WTC11 (cell line): ENCODE measurements at regions of chr18 and their contacts with region 1.

Region 1: GRCh38 chr18:74836296-74837139 is 238.8 kb downstream of the ZNF407 start:
- DNase-seq: no peak
- ATAC-seq: peak; percentile 80
- H3K4me3 Mint-ChIP-seq: no peak overlapping the region
- H3K27ac Mint-ChIP-seq: no peak overlapping the region
- H3K4me1 Mint-ChIP-seq: peaks cover 27% of the 10 kb centered on the region
- H3K27me3 Mint-ChIP-seq: no peaks in the 10 kb centered on the region
- CTCF ChIP-seq: no peak

Region 2: DNA sequence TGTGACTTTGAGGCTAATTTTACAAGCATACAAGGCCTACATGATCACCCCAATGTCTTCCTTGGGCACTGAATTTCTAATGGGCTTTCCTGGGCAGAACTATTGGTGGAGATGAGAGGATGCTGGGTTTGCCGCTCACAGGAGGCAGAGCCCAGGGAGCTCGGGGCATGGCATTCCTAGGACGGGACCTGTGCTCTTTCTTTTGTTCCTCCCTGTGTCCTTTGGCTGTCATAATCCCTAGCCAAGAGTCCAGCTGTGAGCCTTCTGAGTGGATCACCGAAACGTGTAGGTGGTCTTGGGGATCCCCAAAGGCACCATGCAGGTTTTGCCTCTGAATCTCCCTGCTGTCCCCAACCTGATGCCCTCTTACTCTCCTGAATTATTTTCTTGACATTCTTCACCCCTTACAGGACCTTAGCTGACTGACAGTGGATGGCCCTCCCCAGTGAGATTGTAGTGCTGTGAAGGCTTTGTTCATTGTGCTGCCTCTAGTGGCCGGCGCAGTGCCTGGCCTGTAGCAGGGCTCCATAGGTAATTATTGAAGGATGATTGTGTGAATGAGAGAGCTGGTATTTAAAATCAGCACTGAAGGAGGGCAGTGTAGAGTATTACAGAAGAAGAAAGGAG is 17.0 kb before region 1 on chr18:
- CTCF ChIA-PET with region 1: interaction called, 27 read pairs
- POLR2A ChIA-PET with region 1: no interaction called
- DNase-seq: peak; percentile 76
- ATAC-seq: peak; percentile 100
- H3K4me3 Mint-ChIP-seq: no peak overlapping the region
- H3K27ac Mint-ChIP-seq: no peak overlapping the region
- H3K4me1 Mint-ChIP-seq: peaks cover 4% of the 10 kb centered on the region; the same call in 1 of the 2 replicates
- H3K27me3 Mint-ChIP-seq: no peaks in the 10 kb centered on the region
- CTCF ChIP-seq: peak; percentile 62

Region 3: GRCh38 chr18:75322206-75322605 is 485.7 kb after region 1 on chr18:
- CTCF ChIA-PET with region 1: no interaction called
- POLR2A ChIA-PET with region 1: no interaction called
- DNase-seq: no peak
- ATAC-seq: no peak
- H3K4me3 Mint-ChIP-seq: no peak overlapping the region
- H3K27ac Mint-ChIP-seq: no peak overlapping the region
- H3K4me1 Mint-ChIP-seq: no peaks in the 10 kb centered on the region
- H3K27me3 Mint-ChIP-seq: no peaks in the 10 kb centered on the region; the same call in 1 of the 2 replicates
- CTCF ChIP-seq: no peak